ENCODE measurements at regions of chr7 and their contacts with region 1.

Region 1: DNA sequence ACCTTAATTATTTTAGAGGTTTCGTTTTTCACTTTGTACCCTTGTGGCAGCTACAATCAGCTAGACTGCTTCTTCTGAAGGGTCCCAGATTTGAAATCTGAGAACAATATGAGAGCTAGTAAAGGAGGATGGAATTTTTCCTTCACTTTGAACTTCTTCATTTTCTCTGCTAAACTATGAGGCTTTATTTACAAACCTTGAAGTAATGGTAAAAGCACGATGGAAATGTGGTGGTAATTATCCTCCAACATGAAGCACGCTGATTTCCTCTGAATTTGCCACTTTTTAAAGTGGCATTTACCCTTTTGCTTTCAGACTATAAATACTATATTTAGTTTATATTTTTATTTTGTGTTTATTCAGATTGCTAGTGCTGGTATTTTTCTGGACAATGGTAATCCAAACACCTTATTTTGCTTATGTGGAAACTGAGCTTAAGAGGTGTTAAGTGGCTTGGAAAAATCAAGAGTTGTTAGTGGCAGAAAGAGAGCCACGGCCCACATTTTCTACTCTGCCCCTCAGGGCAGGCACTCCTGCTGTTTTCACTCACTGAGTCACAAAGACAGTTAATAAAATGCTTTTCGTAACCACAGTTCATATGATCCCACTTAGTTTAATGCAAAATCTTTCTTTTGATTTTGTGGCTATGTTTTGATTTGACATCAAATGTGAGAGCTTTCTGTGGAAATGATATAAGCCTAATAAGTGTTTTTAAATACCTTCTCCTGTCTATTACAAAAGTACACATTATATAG is 2.7 kb downstream of the SSMEM1 start:
- DNase-seq: peak; percentile 12
- H3K4me3 ChIP-seq: no peak overlapping the region
- CTCF ChIP-seq: no peak

Region 2: DNA sequence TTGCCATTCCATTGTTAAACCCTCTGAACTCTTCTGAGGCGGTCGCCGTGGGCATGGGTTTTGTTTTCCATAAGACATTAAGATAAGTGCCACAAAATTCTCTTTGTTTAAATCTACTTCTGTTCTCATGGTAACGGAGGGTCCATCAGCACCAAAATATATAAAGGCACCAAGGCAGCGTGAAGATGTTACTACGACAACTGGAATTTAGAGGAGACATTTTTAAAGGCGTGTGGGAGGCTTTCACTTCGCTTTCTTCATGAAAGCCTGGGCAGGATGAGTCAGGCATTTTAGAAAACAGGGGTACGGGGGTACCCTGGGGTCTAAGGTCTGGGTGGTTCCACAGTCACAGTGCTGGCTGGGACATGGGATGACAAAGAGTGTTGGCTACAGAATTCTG is 674.0 kb before region 1 on chr7:
- in situ Hi-C with region 1: no loop called
- DNase-seq: no peak
- H3K4me3 ChIP-seq: no peak overlapping the region
- CTCF ChIP-seq: no peak

Region 3: GRCh38 chr7:130263130-130263529 is 52.8 kb after region 1 on chr7:
- in situ Hi-C with region 1: loop called (anchors 5 kb)
- DNase-seq: no peak
- H3K4me3 ChIP-seq: no peak overlapping the region
- CTCF ChIP-seq: no peak